Caco-2 (cell line): ENCODE measurements at regions of chr14 and their contacts with region 1.

Region 1: GRCh38 chr14:68979021-68979782 is at the start of gene ACTN1:
- DNase-seq: peak; percentile 96 to 97
- H3K4me3 ChIP-seq: peak within 1 kb of the TSS; percentile 96
- H3K4me3 Mint-ChIP-seq: peak within 1 kb of the TSS; percentile 98
- H3K27ac Mint-ChIP-seq: peak within 1 kb of the TSS; percentile 84
- H3K4me1 ChIP-seq: peaks cover 33% of the 10 kb centered on the region
- H3K4me1 Mint-ChIP-seq: peaks cover 38% of the 10 kb centered on the region
- H3K27me3 ChIP-seq: no peaks in the 10 kb centered on the region
- H3K27me3 Mint-ChIP-seq: no peaks in the 10 kb centered on the region
- CTCF ChIP-seq: no peak
- total RNA-seq, gene ACTN1: 170 and 181 TPM in 2 replicates

Region 2: DNA sequence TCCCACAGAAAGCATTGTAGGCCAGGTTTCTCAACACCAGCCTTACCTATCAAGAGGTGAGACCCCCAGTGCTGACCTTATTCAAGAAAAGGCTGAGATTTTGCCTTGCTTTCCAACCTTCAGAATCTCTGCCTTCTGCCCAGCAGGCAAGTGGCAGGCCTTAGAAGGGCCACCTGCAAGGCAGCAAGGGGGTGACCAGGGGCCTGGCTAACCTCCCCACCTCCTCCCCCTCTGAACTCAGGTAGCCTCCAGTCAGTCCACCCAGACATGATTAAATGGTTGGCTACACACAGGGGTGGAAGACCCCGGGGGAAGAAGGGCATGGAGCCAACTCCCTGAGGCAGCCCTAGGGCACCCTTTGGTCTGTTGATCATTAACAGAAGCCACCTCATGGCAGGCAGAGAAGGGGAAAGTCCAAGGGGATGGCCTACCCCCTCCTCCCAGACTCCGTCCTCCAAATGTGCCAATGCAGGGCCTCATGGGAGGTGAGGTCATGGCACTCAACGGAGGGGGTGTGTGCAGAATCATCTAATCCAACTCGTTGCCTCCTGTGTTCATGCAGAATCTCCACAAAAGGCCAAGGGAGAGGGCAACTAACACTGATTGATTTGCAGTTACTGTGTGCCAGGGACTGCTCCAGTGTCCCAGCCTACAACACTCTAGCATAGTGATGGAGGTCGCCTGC is 194.8 kb before region 1 on chr14:
- CTCF ChIA-PET with region 1: no interaction called
- POLR2A ChIA-PET with region 1: no interaction called
- intact Hi-C with region 1: no loop called
- DNase-seq: peak; percentile 92 to 95
- H3K4me3 ChIP-seq: no peak overlapping the region
- H3K4me3 Mint-ChIP-seq: peak overlapping the region; percentile 16
- H3K27ac Mint-ChIP-seq: peak overlapping the region; percentile 42
- H3K4me1 ChIP-seq: peaks cover 91% of the 10 kb centered on the region
- H3K4me1 Mint-ChIP-seq: peaks cover 54% of the 10 kb centered on the region
- H3K27me3 ChIP-seq: no peaks in the 10 kb centered on the region
- H3K27me3 Mint-ChIP-seq: no peaks in the 10 kb centered on the region
- CTCF ChIP-seq: no peak

Region 3: DNA sequence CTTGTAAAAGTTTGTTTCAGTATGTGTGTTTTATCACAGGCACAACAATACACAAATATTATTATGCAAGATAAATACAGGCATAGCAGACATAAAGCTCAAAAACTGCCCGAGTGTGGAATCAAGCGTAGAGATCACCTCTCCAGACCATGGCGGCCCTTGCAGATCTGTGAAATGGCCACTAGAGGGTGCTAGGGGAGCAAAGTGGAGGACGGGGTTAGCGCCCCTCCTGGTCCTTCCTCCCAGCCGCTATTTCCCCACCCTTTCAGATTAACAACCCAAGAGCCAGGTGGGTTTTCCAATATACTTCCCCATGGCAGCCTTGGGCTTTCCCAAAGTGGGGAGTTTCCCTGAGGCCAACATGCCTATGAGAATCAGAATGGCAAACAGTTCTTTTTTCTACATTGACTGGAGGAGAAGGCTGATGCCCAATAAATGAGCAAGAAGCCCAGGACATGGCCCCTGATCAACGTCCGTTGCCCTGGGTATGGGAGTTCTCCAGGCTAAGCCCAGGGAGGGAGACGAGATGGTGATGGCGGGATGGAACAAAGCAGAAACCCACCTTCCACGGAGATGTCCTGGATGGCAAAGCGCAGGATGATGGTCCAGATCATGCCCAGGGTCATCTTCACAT is 67.5 kb before region 1 on chr14:
- CTCF ChIA-PET with region 1: interaction called, 5 read pairs
- POLR2A ChIA-PET with region 1: no interaction called
- intact Hi-C with region 1: loop called (anchors 5 kb)
- DNase-seq: peak; percentile 80 to 85
- H3K4me3 ChIP-seq: no peak overlapping the region
- H3K4me3 Mint-ChIP-seq: no peak overlapping the region
- H3K27ac Mint-ChIP-seq: no peak overlapping the region
- H3K4me1 ChIP-seq: no peaks in the 10 kb centered on the region
- H3K4me1 Mint-ChIP-seq: no peaks in the 10 kb centered on the region
- H3K27me3 ChIP-seq: no peaks in the 10 kb centered on the region
- H3K27me3 Mint-ChIP-seq: no peaks in the 10 kb centered on the region
- CTCF ChIP-seq: peak; percentile 97 to 98

Region 4: GRCh38 chr14:68939893-68940613 is 39.1 kb before region 1 on chr14:
- CTCF ChIA-PET with region 1: no interaction called
- POLR2A ChIA-PET with region 1: interaction called, 9 read pairs
- intact Hi-C with region 1: loop called (anchors 1 kb)
- DNase-seq: peak; percentile 43 to 45
- H3K4me3 ChIP-seq: no peak overlapping the region
- H3K4me3 Mint-ChIP-seq: no peak overlapping the region
- H3K27ac Mint-ChIP-seq: peak overlapping the region; percentile 85
- H3K4me1 ChIP-seq: peaks cover 52% of the 10 kb centered on the region
- H3K4me1 Mint-ChIP-seq: peaks cover 45% of the 10 kb centered on the region
- H3K27me3 ChIP-seq: no peaks in the 10 kb centered on the region
- H3K27me3 Mint-ChIP-seq: no peaks in the 10 kb centered on the region
- CTCF ChIP-seq: no peak

Region 5: DNA sequence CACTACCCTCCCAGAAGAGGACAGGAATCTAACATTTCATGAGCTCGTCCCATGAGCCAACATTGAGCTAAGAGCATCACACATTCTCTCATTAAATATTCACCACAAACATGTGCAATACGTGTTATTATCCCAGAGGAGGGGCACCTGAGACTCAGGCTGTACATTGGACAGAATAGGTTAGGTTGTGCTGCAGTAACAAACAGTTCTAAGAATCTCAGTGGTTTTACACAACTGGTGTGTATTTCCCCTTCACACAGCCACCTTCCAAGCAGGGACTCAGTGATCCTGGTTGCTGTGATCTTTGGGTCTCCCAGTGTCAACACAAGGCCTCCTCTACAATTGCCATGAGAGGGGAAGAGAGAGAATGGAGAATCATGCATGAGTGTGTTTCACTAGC is 14.9 kb after region 1 on chr14:
- CTCF ChIA-PET with region 1: no interaction called
- POLR2A ChIA-PET with region 1: no interaction called
- intact Hi-C with region 1: no loop called
- DNase-seq: no peak
- H3K4me3 ChIP-seq: no peak overlapping the region
- H3K4me3 Mint-ChIP-seq: no peak overlapping the region
- H3K27ac Mint-ChIP-seq: no peak overlapping the region
- H3K4me1 ChIP-seq: no peaks in the 10 kb centered on the region
- H3K4me1 Mint-ChIP-seq: no peaks in the 10 kb centered on the region
- H3K27me3 ChIP-seq: no peaks in the 10 kb centered on the region
- H3K27me3 Mint-ChIP-seq: no peaks in the 10 kb centered on the region
- CTCF ChIP-seq: no peak

Region 6: GRCh38 chr14:69049675-69050074 is 70.5 kb after region 1 on chr14:
- CTCF ChIA-PET with region 1: no interaction called
- POLR2A ChIA-PET with region 1: no interaction called
- intact Hi-C with region 1: loop called (anchors 2 kb)
- DNase-seq: no peak
- H3K4me3 ChIP-seq: no peak overlapping the region
- H3K4me3 Mint-ChIP-seq: no peak overlapping the region
- H3K27ac Mint-ChIP-seq: no peak overlapping the region
- H3K4me1 ChIP-seq: peaks cover 28% of the 10 kb centered on the region
- H3K4me1 Mint-ChIP-seq: peaks cover 27% of the 10 kb centered on the region
- H3K27me3 ChIP-seq: no peaks in the 10 kb centered on the region
- H3K27me3 Mint-ChIP-seq: no peaks in the 10 kb centered on the region
- CTCF ChIP-seq: no peak

Region 7: GRCh38 chr14:69079183-69079742 is 100.1 kb after region 1 on chr14:
- CTCF ChIA-PET with region 1: no interaction called
- POLR2A ChIA-PET with region 1: no interaction called
- intact Hi-C with region 1: loop called (anchors 5 kb)
- DNase-seq: no peak
- H3K4me3 ChIP-seq: no peak overlapping the region
- H3K4me3 Mint-ChIP-seq: no peak overlapping the region
- H3K27ac Mint-ChIP-seq: peak overlapping the region; percentile 56
- H3K4me1 ChIP-seq: peaks cover 61% of the 10 kb centered on the region
- H3K4me1 Mint-ChIP-seq: peaks cover 43% of the 10 kb centered on the region
- H3K27me3 ChIP-seq: no peaks in the 10 kb centered on the region
- H3K27me3 Mint-ChIP-seq: no peaks in the 10 kb centered on the region
- CTCF ChIP-seq: no peak

Region 8: DNA sequence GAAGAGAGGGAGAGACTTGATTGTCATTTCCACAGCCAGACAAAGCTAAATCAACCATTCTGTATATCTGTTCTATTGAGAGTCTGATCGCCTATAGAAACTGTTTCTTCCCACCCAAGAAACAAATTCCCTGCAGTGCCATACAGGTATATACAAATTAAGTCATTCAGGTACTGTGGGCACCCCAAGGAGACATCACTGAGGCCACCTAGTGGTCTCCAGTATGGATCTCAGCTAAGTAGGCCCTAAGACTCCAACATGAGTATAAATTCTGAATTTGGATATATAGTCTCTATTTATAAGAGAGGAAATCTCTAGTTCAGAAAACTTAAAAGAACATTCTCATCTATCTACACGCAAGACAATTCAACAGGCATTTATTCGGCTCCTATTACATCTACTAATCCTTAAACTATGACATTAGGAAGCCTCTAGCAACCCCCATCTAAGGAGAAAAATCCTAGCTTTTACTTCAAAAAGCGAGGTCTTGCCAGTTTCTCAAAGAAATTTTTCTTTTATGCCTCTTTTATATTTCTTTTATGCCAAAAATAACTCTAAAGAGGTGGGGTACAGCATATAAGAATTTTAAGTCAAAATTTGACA is 111.1 kb after region 1 on chr14:
- CTCF ChIA-PET with region 1: no interaction called
- POLR2A ChIA-PET with region 1: no interaction called
- intact Hi-C with region 1: loop called (anchors 2 kb)
- DNase-seq: peak; percentile 51 to 58
- H3K4me3 ChIP-seq: no peak overlapping the region
- H3K4me3 Mint-ChIP-seq: no peak overlapping the region
- H3K27ac Mint-ChIP-seq: no peak overlapping the region
- H3K4me1 ChIP-seq: peaks cover 37% of the 10 kb centered on the region
- H3K4me1 Mint-ChIP-seq: peaks cover 26% of the 10 kb centered on the region
- H3K27me3 ChIP-seq: no peaks in the 10 kb centered on the region; the same call in 1 of the 2 replicates
- H3K27me3 Mint-ChIP-seq: no peaks in the 10 kb centered on the region
- CTCF ChIP-seq: peak; percentile 47 to 77